Body of pancreas (tissue), 4 donors: ENCODE measurements at regions of chr2 and their contacts with region 1.

Region 1: DNA sequence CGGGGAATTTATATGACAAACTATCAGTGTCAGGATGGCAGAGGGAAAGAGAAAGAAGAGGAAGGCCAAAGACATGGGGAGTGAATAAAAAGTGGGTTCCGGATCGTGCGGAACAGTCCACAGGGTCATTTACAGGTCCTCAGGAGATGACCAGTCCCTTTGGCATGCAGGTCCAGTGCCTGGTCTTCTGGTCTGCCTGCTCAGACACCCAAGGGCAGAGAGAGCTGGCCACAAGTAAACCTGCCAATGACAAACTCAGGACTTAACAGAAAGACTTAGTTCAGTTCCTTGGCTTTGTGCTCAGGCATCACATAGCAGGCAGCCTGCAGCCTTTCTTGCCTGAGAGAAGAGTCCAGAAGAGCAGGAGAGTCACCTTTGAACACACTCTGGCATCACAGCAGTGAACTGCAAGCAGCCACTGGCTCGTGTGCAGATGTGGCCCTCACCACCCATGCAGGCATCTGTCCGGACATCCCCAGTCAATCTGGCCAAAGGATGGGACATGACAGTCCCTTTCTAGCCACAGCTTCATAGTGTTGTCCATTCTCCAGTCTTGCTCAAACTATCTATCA is 14.0 kb downstream of the TMEM127 start:
- DNase-seq: peak; percentile 37 to 71 (median 58)
- ATAC-seq: peak; percentile 72
- H3K4me3 ChIP-seq: no peak overlapping the region
- H3K27ac ChIP-seq: peak overlapping the region in 1 of 4 donors; percentile 23
- H3K4me1 ChIP-seq: peaks cover 6% of the 10 kb centered on the region
- H3K27me3 ChIP-seq: no peaks in the 10 kb centered on the region
- CTCF ChIP-seq: no peak
- POLR2A ChIP-seq: no peak

Region 2: DNA sequence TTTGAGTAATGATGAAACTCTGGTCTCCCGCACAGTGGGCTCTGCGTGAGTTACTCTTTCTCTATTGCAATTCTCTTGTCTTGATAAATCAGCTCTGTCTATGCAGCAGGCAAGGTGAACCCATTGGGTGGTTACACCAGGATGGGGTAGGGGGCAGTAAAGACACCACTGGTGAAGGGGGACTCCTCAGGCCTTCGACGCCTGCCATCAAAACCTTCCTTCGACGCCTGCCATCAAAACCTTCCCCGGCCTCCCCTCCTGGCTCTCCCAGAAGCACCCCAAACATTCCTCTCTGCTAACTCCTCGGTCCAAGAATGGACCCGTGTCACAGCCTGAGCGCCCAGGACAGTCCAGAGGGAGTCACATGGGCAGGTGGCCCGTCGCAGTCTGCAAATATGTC is 38.4 kb before region 1 on chr2:
- intact Hi-C with region 1: loop called (anchors 5 kb)
- DNase-seq: no peak
- ATAC-seq: no peak
- H3K4me3 ChIP-seq: no peak overlapping the region
- H3K27ac ChIP-seq: no peak overlapping the region
- H3K4me1 ChIP-seq: peaks cover 13% of the 10 kb centered on the region
- H3K27me3 ChIP-seq: no peaks in the 10 kb centered on the region
- CTCF ChIP-seq: no peak
- POLR2A ChIP-seq: no peak